Activated CD4-positive, alpha-beta T cell treated with anti-CD3 and anti-CD28 coated beads for 36 hours (primary cell): ENCODE measurements at regions of chr7 and their contacts with region 1.

Region 1: GRCh38 chr7:3695602-3696001 is 394.6 kb downstream of the SDK1 start:
- DNase-seq: no peak
- ATAC-seq: no peak
- H3K4me3 Mint-ChIP-seq: no peak overlapping the region
- H3K27ac Mint-ChIP-seq: no peak overlapping the region
- H3K4me1 Mint-ChIP-seq: peaks cover 18% of the 10 kb centered on the region
- H3K27me3 Mint-ChIP-seq: peaks cover 2% of the 10 kb centered on the region

Region 2: GRCh38 chr7:3673524-3673923 is 22.1 kb before region 1 on chr7:
- CTCF ChIA-PET with region 1: no interaction called
- POLR2A ChIA-PET with region 1: no interaction called
- intact Hi-C with region 1: loop called in 1 of 2 experiments (anchors 1 kb)
- DNase-seq: peak; percentile 77
- ATAC-seq: no peak
- H3K4me3 Mint-ChIP-seq: no peak overlapping the region
- H3K27ac Mint-ChIP-seq: no peak overlapping the region
- H3K4me1 Mint-ChIP-seq: peaks cover 2% of the 10 kb centered on the region
- H3K27me3 Mint-ChIP-seq: no peaks in the 10 kb centered on the region

Region 3: GRCh38 chr7:3867863-3868262 is 172.3 kb after region 1 on chr7:
- CTCF ChIA-PET with region 1: no interaction called
- POLR2A ChIA-PET with region 1: no interaction called
- intact Hi-C with region 1: no loop called
- DNase-seq: no peak
- ATAC-seq: no peak
- H3K4me3 Mint-ChIP-seq: no peak overlapping the region
- H3K27ac Mint-ChIP-seq: no peak overlapping the region
- H3K4me1 Mint-ChIP-seq: no peaks in the 10 kb centered on the region
- H3K27me3 Mint-ChIP-seq: peaks cover 3% of the 10 kb centered on the region

Region 4: DNA sequence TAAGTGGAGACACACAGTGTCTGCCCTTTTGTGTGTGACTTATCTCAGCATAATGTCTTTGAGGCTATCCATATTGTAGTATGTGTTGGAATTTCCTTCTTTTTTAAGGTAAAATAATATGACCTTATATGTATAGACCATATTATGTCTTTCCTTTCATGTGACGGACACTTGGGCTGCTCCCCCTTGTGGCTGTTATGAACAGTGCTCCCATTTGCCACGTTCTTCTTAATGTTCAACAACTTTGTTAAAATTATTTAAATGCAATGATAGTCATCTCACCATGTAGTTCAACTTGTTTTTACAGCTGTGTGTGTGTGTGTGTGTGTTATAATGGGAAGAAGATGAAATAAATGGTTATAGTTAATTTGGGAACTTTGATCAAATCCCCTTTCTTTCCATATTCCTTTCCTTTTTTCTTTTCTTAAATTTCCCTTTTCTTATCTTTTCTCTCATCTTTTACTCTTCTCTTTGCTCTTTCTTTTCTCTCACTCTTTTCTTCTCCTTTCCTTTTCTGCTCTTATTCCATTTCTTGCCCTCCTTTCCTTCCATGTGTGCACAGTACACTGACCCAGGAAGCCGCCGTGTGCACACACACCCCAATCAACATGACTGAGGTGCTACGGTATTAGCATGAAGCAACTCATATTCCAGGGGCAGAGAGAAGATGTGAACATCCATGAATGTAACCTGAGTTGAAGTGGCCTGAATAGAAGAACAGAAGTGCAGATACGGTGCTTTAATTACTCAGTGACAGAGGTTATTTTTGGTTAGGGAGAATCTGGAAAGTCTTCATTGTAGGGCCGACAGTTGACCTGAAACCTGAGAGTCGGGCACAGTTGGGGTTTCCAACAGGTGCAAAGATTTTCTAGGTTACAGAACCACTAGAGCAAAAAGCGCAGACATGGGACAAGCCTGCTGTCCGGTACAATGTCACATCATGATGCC is 202.1 kb after region 1 on chr7:
- CTCF ChIA-PET with region 1: no interaction called
- POLR2A ChIA-PET with region 1: no interaction called
- intact Hi-C with region 1: loop called in 1 of 2 experiments (anchors 5 kb)
- DNase-seq: peak; percentile 67
- ATAC-seq: peak; percentile 60
- H3K4me3 Mint-ChIP-seq: no peak overlapping the region
- H3K27ac Mint-ChIP-seq: no peak overlapping the region
- H3K4me1 Mint-ChIP-seq: no peaks in the 10 kb centered on the region
- H3K27me3 Mint-ChIP-seq: peaks cover 4% of the 10 kb centered on the region